ENCODE measurements at regions of chr2 and their contacts with region 1.

Region 1: GRCh38 chr2:149017116-149017985 is 21.1 kb upstream of the LYPD6B start:
- DNase-seq: peak; percentile 40
- H3K4me3 ChIP-seq: no peak overlapping the region
- H3K27ac ChIP-seq: no peak overlapping the region
- H3K4me1 ChIP-seq: no peaks in the 10 kb centered on the region
- H3K27me3 ChIP-seq: no peaks in the 10 kb centered on the region
- CTCF ChIP-seq: peak; percentile 87 to 90

Region 2: GRCh38 chr2:149038442-149039212 is 21.3 kb after region 1 on chr2 and contains the start of gene LYPD6B:
- CTCF ChIA-PET with region 1: interaction called, 6 read pairs
- dilution Hi-C with region 1: no loop called
- in situ Hi-C with region 1: no loop called
- intact Hi-C with region 1: loop called (anchors 1 kb)
- DNase-seq: peak; percentile 16
- H3K4me3 ChIP-seq: peak within 1 kb of the TSS; percentile 34 to 43 (median 42)
- H3K27ac ChIP-seq: no peak within 1 kb of the TSS
- H3K4me1 ChIP-seq: peaks cover 10% of the 10 kb centered on the region
- H3K27me3 ChIP-seq: no peaks in the 10 kb centered on the region
- CTCF ChIP-seq: no peak
- total RNA-seq, gene LYPD6B: 0.33 to 3.0 TPM

Region 3: GRCh38 chr2:149055751-149056150 is 38.4 kb after region 1 on chr2:
- CTCF ChIA-PET with region 1: no interaction called
- dilution Hi-C with region 1: no loop called
- in situ Hi-C with region 1: no loop called
- intact Hi-C with region 1: no loop called
- DNase-seq: no peak
- H3K4me3 ChIP-seq: no peak overlapping the region
- H3K27ac ChIP-seq: no peak overlapping the region
- H3K4me1 ChIP-seq: no peaks in the 10 kb centered on the region
- H3K27me3 ChIP-seq: no peaks in the 10 kb centered on the region
- CTCF ChIP-seq: no peak

Region 4: GRCh38 chr2:149313512-149313972 is 296.2 kb after region 1 on chr2:
- CTCF ChIA-PET with region 1: no interaction called
- dilution Hi-C with region 1: no loop called
- in situ Hi-C with region 1: loop called in 1 of 2 experiments (anchors 10 kb)
- intact Hi-C with region 1: loop called (anchors 1 kb)
- DNase-seq: peak; percentile 32
- H3K4me3 ChIP-seq: no peak overlapping the region
- H3K27ac ChIP-seq: no peak overlapping the region
- H3K4me1 ChIP-seq: no peaks in the 10 kb centered on the region
- H3K27me3 ChIP-seq: no peaks in the 10 kb centered on the region
- CTCF ChIP-seq: peak; percentile 84 to 90

Region 5: DNA sequence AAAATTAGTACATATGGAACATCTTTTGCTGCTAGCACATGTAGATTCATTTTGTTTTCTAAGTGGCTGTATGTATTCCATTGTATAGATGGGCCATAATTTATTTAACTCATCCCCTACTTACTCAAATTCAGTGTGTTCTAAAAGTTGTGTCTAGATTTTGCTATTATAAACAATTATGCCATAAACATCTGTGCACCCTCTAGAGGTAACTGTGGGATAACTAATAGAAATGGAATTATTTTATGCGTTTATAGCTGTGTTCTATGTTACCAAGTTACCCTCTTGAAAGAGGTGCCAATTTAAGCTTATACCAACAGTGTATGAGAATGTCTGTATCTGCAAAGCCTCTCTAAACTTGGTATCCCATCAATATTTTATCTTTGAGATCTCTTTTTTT is 469.8 kb after region 1 on chr2:
- CTCF ChIA-PET with region 1: no interaction called
- dilution Hi-C with region 1: no loop called
- in situ Hi-C with region 1: no loop called
- intact Hi-C with region 1: loop called (anchors 1 kb)
- DNase-seq: no peak
- H3K4me3 ChIP-seq: no peak overlapping the region
- H3K27ac ChIP-seq: no peak overlapping the region
- H3K4me1 ChIP-seq: no peaks in the 10 kb centered on the region
- H3K27me3 ChIP-seq: peaks cover 6% of the 10 kb centered on the region
- CTCF ChIP-seq: peak in 1 of 2 donors; percentile 5

Measured in mammary epithelial cell (primary cell).